CD4-positive, alpha-beta T cell (primary cell): ENCODE measurements at regions of chr12 and their contacts with region 1.

Region 1: GRCh38 chr12:123436017-123436964 is at the start of gene RILPL2:
- DNase-seq: peak; percentile 78 to 97 (median 89)
- ATAC-seq: peak; percentile 87
- H3K4me3 ChIP-seq: peak within 1 kb of the TSS; percentile 94
- H3K4me3 Mint-ChIP-seq: peak within 1 kb of the TSS; percentile 95
- H3K27ac ChIP-seq: peak within 1 kb of the TSS; percentile 86 to 90
- H3K27ac Mint-ChIP-seq: peak within 1 kb of the TSS; percentile 80
- H3K4me1 ChIP-seq: peaks cover 59% of the 10 kb centered on the region
- H3K4me1 Mint-ChIP-seq: peaks cover 40% of the 10 kb centered on the region
- H3K27me3 ChIP-seq: no peaks in the 10 kb centered on the region
- H3K27me3 Mint-ChIP-seq: no peaks in the 10 kb centered on the region
- CTCF ChIP-seq: no peak
- total RNA-seq, gene RILPL2: 4.9 to 5.5 TPM

Region 2: GRCh38 chr12:123388177-123388947 is 47.9 kb before region 1 on chr12:
- CTCF ChIA-PET with region 1: no interaction called
- POLR2A ChIA-PET with region 1: interaction called, 9 read pairs
- intact Hi-C with region 1: loop called in 1 of 2 experiments (anchors 5 kb)
- DNase-seq: peak; percentile 34 to 88 (median 67)
- ATAC-seq: peak; percentile 61
- H3K4me3 ChIP-seq: peak overlapping the region; percentile 87
- H3K4me3 Mint-ChIP-seq: peak overlapping the region; percentile 91
- H3K27ac ChIP-seq: peak overlapping the region; percentile 53 to 76
- H3K27ac Mint-ChIP-seq: peak overlapping the region; percentile 73
- H3K4me1 ChIP-seq: peaks cover 58% of the 10 kb centered on the region
- H3K4me1 Mint-ChIP-seq: peaks cover 52% of the 10 kb centered on the region
- H3K27me3 ChIP-seq: no peaks in the 10 kb centered on the region
- H3K27me3 Mint-ChIP-seq: no peaks in the 10 kb centered on the region
- CTCF ChIP-seq: no peak

Region 3: DNA sequence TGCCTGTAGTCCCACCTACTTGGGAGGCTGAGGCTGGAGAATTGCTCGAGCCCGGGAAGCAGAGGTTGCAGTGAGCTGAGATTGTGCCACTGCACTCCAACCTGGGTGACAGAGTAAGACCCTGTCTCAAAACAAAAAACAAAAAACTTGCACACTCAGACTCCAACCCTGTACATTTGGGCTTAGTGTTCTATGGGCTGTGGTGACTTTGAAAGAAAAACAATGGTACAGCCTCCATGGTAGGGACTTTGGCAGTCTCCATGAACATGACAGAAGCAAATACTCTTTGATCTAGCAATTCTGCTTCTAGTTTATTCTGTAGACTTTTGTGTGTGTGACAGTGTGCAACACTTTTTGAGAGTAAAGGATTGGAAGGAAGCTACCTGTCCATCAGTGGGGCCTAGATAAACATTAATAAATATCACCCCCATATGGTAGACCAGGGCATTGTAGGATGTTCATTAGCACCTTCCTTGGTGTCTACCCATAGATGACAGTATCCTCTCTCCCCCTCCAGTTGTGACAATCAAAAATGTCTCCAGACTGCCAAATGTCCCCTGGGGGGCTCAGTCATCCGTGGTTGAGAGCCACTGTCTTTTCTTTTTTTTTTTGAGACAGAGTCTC is 32.4 kb after region 1 on chr12:
- CTCF ChIA-PET with region 1: no interaction called
- POLR2A ChIA-PET with region 1: no interaction called
- intact Hi-C with region 1: loop called in 1 of 2 experiments (anchors 5 kb)
- DNase-seq: peak in 3 of 14 experiments; percentile 54 to 65 (median 56)
- ATAC-seq: peak; percentile 74
- H3K4me3 ChIP-seq: no peak overlapping the region
- H3K4me3 Mint-ChIP-seq: no peak overlapping the region
- H3K27ac ChIP-seq: no peak overlapping the region
- H3K27ac Mint-ChIP-seq: no peak overlapping the region
- H3K4me1 ChIP-seq: peaks cover 4% of the 10 kb centered on the region
- H3K4me1 Mint-ChIP-seq: peaks cover 10% of the 10 kb centered on the region
- H3K27me3 ChIP-seq: no peaks in the 10 kb centered on the region
- H3K27me3 Mint-ChIP-seq: no peaks in the 10 kb centered on the region
- CTCF ChIP-seq: peak; percentile 34

Region 4: DNA sequence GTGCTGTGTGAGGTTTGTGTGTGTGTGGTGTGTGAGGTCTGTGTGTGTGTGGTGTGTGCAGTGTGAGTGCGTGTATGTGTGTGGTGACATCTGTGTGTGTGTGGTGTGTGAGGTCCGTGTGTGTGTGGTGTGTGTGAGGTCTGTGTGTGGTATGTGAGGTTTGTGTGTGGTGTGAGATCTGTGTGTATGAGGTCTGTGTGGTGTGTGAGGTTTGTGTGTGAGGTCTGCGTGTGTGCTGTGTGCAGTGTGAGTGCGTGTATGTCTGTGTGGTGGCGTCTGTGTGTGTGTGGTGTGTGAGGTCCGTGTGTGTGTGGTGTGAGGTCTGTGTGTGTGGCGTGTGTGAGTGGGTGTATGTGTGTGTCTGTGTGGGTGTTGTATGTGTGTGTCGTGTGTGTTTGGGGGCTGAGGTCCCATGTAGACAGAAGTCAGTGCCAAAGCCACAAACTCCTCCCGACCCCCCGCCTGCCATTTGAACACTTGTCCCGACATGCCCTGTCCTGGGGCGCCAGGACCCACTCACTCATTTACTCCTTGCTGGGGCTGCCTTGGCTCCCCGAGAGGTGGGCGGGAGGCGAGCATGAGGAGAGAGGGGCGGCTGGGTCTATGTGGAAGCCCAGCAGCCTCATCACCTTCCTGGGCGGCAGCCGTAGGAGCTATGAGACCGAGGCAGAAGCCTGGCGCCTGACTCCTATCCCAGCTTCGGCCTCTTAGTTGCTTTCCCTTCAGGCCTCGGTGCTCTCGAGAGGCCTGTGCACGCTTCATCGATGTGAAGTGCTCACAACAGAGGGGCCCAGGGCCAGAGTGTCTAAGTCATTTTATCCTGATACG is 76.8 kb after region 1 on chr12:
- CTCF ChIA-PET with region 1: no interaction called
- POLR2A ChIA-PET with region 1: no interaction called
- intact Hi-C with region 1: no loop called
- DNase-seq: no peak
- ATAC-seq: no peak
- H3K4me3 ChIP-seq: no peak overlapping the region
- H3K4me3 Mint-ChIP-seq: no peak overlapping the region
- H3K27ac ChIP-seq: no peak overlapping the region
- H3K27ac Mint-ChIP-seq: no peak overlapping the region
- H3K4me1 ChIP-seq: no peaks in the 10 kb centered on the region
- H3K4me1 Mint-ChIP-seq: no peaks in the 10 kb centered on the region
- H3K27me3 ChIP-seq: no peaks in the 10 kb centered on the region
- H3K27me3 Mint-ChIP-seq: no peaks in the 10 kb centered on the region
- CTCF ChIP-seq: no peak

Region 5: GRCh38 chr12:123533672-123534643 is 97.7 kb after region 1 on chr12 and contains the start of gene RILPL1:
- CTCF ChIA-PET with region 1: no interaction called
- POLR2A ChIA-PET with region 1: no interaction called
- intact Hi-C with region 1: loop called in 1 of 2 experiments (anchors 5 kb)
- DNase-seq: peak in 12 of 14 experiments; percentile 13 to 75 (median 36)
- ATAC-seq: peak; percentile 72
- H3K4me3 ChIP-seq: peak within 1 kb of the TSS; percentile 67
- H3K4me3 Mint-ChIP-seq: peak within 1 kb of the TSS; percentile 96
- H3K27ac ChIP-seq: no peak within 1 kb of the TSS
- H3K27ac Mint-ChIP-seq: peak within 1 kb of the TSS; percentile 50
- H3K4me1 ChIP-seq: peaks cover 23% of the 10 kb centered on the region
- H3K4me1 Mint-ChIP-seq: peaks cover 18% of the 10 kb centered on the region
- H3K27me3 ChIP-seq: no peaks in the 10 kb centered on the region
- H3K27me3 Mint-ChIP-seq: no peaks in the 10 kb centered on the region
- CTCF ChIP-seq: peak; percentile 28
- total RNA-seq, gene RILPL1: 3.3 to 3.4 TPM